Heart left ventricle (tissue), 16 donors: ENCODE measurements at regions of chr1 and their contacts with region 1.

Region 1: GRCh38 chr1:237440346-237440745 is 398.4 kb downstream of the RYR2 start:
- DNase-seq: no peak
- ATAC-seq: no peak
- H3K4me3 ChIP-seq: no peak overlapping the region
- H3K27ac ChIP-seq: peak overlapping the region in 1 of 12 donors; percentile 10
- H3K4me1 ChIP-seq: peaks cover 0 to 54% (median 6%) of the 10 kb centered on the region in 12 donors
- H3K27me3 ChIP-seq: no peaks in the 10 kb centered on the region
- CTCF ChIP-seq: no peak
- POLR2A ChIP-seq: no peak

Region 2: DNA sequence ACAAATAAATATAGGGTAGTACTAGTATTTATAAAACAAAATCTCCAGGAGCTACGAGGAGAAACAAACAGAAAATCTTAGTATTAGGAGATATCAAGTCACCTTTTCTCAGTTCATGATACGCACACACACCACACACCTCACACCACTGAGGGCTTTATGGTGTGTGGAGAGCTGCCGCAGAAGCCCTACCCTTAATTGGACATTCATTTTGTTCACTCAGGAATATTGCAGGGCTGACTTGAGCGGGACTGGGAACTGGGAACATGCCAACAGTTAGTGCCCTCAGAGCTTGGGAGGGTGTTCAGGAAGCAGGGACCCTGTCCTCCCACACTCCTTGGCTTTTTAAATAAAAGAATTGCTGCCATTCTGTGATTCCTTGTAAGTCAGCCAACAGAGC is 11.5 kb before region 1 on chr1:
- intact Hi-C with region 1: loop called in 1 of 10 experiments (anchors 1 kb)
- DNase-seq: no peak
- ATAC-seq: peak; percentile 7 to 54 (median 27)
- H3K4me3 ChIP-seq: no peak overlapping the region
- H3K27ac ChIP-seq: no peak overlapping the region
- H3K4me1 ChIP-seq: no peaks in the 10 kb centered on the region
- H3K27me3 ChIP-seq: no peaks in the 10 kb centered on the region
- CTCF ChIP-seq: no peak
- POLR2A ChIP-seq: no peak